Right ventricle myocardium inferior (tissue), 1 donor: ENCODE measurements at regions of chr10 and their contacts with region 1.

Region 1: DNA sequence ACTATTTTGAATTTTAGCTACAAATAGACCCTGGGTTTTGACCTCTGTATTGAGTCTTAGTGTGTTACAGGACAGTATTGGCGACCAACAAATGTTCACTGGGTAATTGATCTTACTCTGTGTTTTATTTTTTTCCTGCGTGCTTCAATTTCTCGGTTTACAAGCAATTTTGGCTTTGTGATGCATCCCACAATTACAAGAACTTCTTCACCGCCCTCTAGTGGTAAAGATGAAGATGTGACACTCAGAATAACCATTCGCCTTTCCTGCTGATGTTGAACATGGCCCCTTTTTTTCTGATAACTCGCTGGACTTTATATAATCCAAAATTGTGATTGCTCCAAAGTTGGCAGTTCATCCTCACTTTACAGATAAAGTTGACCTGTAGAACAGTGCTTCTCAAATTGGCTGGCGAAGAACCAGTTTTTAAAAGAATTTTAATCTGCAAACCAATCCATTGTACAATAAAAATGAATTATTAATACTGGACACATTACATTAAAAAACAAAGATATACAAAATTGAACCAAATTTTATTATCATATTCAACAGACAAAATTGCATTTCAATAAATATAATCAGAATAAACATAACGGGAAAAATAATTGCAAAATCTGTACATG is 20.2 kb upstream of the SMC3 start:
- DNase-seq: no peak
- ATAC-seq: no peak

Region 2: DNA sequence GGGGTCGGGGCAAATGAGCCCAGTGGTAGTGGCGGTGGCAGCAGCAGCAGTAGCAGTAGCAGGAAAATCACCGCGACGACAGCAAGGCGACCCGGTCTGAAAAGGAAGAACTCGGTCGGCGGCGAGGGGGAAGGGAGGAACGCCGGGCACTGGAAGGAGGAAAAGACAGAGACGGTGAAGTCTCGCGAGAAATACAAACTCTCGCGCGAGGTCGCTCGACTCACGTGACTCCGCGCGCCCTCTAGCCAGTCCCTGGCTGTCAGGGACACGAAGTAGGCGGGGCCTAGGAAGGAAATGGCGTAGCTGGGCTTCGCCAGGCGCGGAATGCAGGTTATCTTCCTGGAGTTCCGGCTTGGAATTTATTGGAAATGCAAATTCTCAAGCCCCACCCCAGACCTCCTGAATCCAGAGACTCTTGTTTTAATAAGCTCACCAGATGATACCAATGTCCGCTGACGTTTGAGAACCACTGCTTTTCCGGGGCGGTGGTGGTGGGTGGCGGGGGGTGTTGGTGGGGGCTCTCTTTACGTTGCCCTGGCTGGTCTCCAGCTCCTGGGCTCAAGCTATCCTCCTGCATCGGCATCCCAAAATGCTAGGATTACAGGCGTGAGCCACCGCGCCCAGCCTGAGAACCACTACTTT is 242.3 kb before region 1 on chr10 and contains the start of gene SMNDC1:
- intact Hi-C with region 1: loop called (anchors 2 kb)
- DNase-seq: peak; percentile 98
- ATAC-seq: peak; percentile 96
- total RNA-seq, gene SMNDC1: 27.6 TPM